ENCODE measurements at regions of chr2 and their contacts with region 1.

Region 1: GRCh38 chr2:166539340-166540162 is 45.5 kb upstream of the SCN7A start:
- DNase-seq: peak; percentile 39
- H3K4me3 ChIP-seq: peak overlapping the region in 1 of 2 experiments; percentile 18; a peak in 1 of 4 replicates
- H3K27ac ChIP-seq: peak overlapping the region in 1 of 2 experiments; percentile 5; a peak in 1 of 4 replicates
- H3K4me1 ChIP-seq: peaks cover 0 to 2% of the 10 kb centered on the region in 2 experiments; a peak in 1 of 4 replicates
- H3K27me3 ChIP-seq: no peaks in the 10 kb centered on the region
- CTCF ChIP-seq: peak; percentile 94
- EP300 ChIP-seq: no peak
- RAD21 ChIP-seq: peak; percentile 96

Region 2: GRCh38 chr2:166700079-166700478 is 160.5 kb after region 1 on chr2:
- CTCF ChIA-PET with region 1: interaction called, 16 read pairs
- POLR2A ChIA-PET with region 1: no interaction called
- DNase-seq: peak; percentile 11
- H3K4me3 ChIP-seq: no peak overlapping the region
- H3K27ac ChIP-seq: no peak overlapping the region
- H3K4me1 ChIP-seq: no peaks in the 10 kb centered on the region
- H3K27me3 ChIP-seq: no peaks in the 10 kb centered on the region
- CTCF ChIP-seq: peak; percentile 55
- EP300 ChIP-seq: no peak
- RAD21 ChIP-seq: peak; percentile 79

Region 3: GRCh38 chr2:166792808-166793207 is 253.3 kb after region 1 on chr2:
- CTCF ChIA-PET with region 1: no interaction called
- POLR2A ChIA-PET with region 1: no interaction called
- DNase-seq: no peak
- H3K4me3 ChIP-seq: no peak overlapping the region
- H3K27ac ChIP-seq: no peak overlapping the region
- H3K4me1 ChIP-seq: no peaks in the 10 kb centered on the region
- H3K27me3 ChIP-seq: no peaks in the 10 kb centered on the region
- CTCF ChIP-seq: no peak
- EP300 ChIP-seq: no peak
- RAD21 ChIP-seq: no peak

Region 4: GRCh38 chr2:167681234-167682015 is 1141.9 kb after region 1 on chr2:
- CTCF ChIA-PET with region 1: interaction called, 11 read pairs
- POLR2A ChIA-PET with region 1: no interaction called
- DNase-seq: peak; percentile 55
- H3K4me3 ChIP-seq: no peak overlapping the region
- H3K27ac ChIP-seq: peak overlapping the region in 1 of 2 experiments; percentile 91; a peak in 2 of 4 replicates
- H3K4me1 ChIP-seq: peaks cover 0 to 13% of the 10 kb centered on the region in 2 experiments; a peak in 2 of 4 replicates
- H3K27me3 ChIP-seq: no peaks in the 10 kb centered on the region
- CTCF ChIP-seq: no peak
- EP300 ChIP-seq: no peak
- RAD21 ChIP-seq: no peak

Measured in SK-N-SH (cell line).